GM12878 (cell line): ENCODE measurements at regions of chr11 and their contacts with region 1.

Region 1: DNA sequence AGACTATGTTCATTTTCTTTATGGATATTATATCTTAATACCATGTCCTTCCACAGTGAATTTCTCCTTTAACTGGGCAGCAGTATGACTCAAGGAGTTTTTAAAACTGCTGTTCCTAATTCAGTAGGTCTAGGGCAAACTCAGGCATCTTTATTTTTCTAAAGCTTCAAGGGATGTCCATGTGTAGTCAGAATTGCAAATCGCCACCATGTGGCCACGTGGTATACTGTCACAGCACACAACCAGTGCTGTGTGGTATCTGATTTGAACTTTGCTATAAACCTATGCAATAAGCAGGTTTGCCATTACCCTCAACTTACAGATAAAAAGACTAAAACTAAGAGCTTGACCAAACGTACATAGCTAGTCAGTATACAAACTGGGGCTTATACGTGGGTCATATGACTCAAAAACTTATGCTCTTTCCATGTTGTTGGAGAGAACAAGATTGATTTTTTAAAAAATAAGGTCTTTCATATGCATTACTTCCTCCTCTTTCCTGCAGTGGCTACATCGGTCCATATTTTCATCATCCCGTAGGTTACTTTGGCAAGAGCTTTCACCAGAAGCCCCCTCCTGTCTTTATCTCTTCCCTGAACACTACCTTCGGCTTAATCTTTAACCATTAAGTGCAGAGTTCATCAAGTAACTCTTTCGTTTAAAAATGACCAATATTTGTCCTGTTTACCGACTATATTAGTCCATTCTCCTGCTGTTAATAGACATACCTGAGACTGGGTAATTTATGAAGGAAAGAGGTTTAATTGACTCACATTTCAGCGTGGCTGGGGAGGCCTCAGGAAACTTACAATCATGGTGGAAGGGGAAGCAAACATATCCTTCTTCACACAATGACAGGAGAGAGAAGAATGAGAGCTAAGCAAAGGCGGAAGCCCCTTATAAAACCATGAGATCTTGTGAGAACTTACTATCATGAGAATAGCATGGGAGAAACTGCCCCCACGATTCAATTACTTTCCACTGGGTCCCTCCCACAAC is 8.0 kb upstream of the HTATIP2 start:
- DNase-seq: no peak
- ATAC-seq: peak; percentile 95
- H3K4me3 ChIP-seq: no peak overlapping the region
- H3K27ac ChIP-seq: no peak overlapping the region
- H3K4me1 ChIP-seq: no peaks in the 10 kb centered on the region
- H3K27me3 ChIP-seq: no peaks in the 10 kb centered on the region
- CTCF ChIP-seq: peak; percentile 45 to 57 (median 50)
- EP300 ChIP-seq: no peak
- POLR2A ChIP-seq: no peak
- RAD21 ChIP-seq: peak; percentile 27; the same call in 1 of the 2 replicates

Region 2: DNA sequence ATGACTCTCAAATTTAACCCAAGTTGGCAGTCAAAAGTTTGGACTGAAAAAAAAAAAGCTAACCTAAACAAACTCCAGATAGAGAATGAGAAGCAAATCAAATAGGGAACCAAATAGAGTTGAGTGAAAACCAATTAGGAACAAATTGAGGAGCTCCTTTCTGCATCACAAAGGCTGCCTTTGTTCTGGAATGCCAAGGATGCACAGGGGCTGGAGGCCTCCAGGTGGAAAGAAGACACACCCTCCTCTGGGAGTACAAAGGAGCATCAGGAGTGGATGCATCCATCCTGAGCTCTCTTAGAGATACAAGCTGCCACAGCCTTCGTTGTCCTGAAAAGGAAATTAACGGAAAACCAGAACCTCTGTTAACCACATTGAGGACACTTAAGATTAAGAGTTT is 1489.6 kb before region 1 on chr11:
- CTCF ChIA-PET with region 1: no interaction called
- POLR2A ChIA-PET with region 1: no interaction called
- RAD21 ChIA-PET with region 1: no interaction called
- SMC1A ChIA-PET with region 1: no interaction called
- in situ Hi-C with region 1: no loop called
- intact Hi-C with region 1: no loop called
- DNase-seq: no peak
- ATAC-seq: no peak
- H3K4me3 ChIP-seq: no peak overlapping the region
- H3K27ac ChIP-seq: no peak overlapping the region
- H3K4me1 ChIP-seq: no peaks in the 10 kb centered on the region
- H3K27me3 ChIP-seq: no peaks in the 10 kb centered on the region; a peak in 1 of 4 replicates
- CTCF ChIP-seq: no peak
- EP300 ChIP-seq: no peak
- POLR2A ChIP-seq: no peak
- RAD21 ChIP-seq: no peak

Region 3: GRCh38 chr11:20243974-20244373 is 111.5 kb before region 1 on chr11:
- CTCF ChIA-PET with region 1: interaction called, 4 read pairs
- POLR2A ChIA-PET with region 1: no interaction called
- RAD21 ChIA-PET with region 1: interaction called, 3 read pairs
- SMC1A ChIA-PET with region 1: interaction called, 5 read pairs
- in situ Hi-C with region 1: no loop called
- intact Hi-C with region 1: loop called (anchors 2 kb)
- DNase-seq: no peak
- ATAC-seq: no peak
- H3K4me3 ChIP-seq: no peak overlapping the region
- H3K27ac ChIP-seq: no peak overlapping the region
- H3K4me1 ChIP-seq: no peaks in the 10 kb centered on the region
- H3K27me3 ChIP-seq: peaks cover 0 to 3% of the 10 kb centered on the region in 2 experiments; a peak in 1 of 4 replicates
- CTCF ChIP-seq: peak in 2 of 3 experiments; percentile 23 to 29; a peak in 4 of 6 replicates
- EP300 ChIP-seq: no peak
- POLR2A ChIP-seq: no peak
- RAD21 ChIP-seq: peak; percentile 31; the same call in 1 of the 2 replicates

Region 4: DNA sequence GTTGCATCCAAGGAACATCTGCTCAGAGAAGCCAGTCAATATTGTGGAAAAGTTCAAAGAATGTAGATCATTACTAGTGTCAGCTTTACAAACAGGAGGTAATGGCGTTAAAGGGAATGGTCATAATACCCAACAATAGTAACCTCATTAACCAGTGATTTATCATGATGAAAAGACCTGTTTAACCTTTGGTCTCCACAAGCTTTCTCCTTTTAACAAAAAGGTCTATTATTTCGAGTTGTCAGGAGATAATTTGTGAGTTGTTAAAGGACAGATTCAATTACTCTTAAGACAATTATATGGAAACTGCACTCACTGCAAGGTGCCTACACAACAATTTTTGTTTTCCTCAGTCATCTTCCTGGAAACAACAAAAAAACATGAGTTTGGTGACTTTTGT is 65.8 kb before region 1 on chr11:
- CTCF ChIA-PET with region 1: no interaction called
- POLR2A ChIA-PET with region 1: no interaction called
- RAD21 ChIA-PET with region 1: no interaction called
- SMC1A ChIA-PET with region 1: no interaction called
- in situ Hi-C with region 1: no loop called
- intact Hi-C with region 1: no loop called
- DNase-seq: no peak
- ATAC-seq: no peak
- H3K4me3 ChIP-seq: no peak overlapping the region
- H3K27ac ChIP-seq: no peak overlapping the region
- H3K4me1 ChIP-seq: no peaks in the 10 kb centered on the region
- H3K27me3 ChIP-seq: 0 out of 4 replicates have a peak, but pooled peaks cover 0 to 3% of the 10 kb centered on the region in 2 experiments
- CTCF ChIP-seq: no peak
- EP300 ChIP-seq: no peak
- POLR2A ChIP-seq: no peak
- RAD21 ChIP-seq: no peak

Region 5: DNA sequence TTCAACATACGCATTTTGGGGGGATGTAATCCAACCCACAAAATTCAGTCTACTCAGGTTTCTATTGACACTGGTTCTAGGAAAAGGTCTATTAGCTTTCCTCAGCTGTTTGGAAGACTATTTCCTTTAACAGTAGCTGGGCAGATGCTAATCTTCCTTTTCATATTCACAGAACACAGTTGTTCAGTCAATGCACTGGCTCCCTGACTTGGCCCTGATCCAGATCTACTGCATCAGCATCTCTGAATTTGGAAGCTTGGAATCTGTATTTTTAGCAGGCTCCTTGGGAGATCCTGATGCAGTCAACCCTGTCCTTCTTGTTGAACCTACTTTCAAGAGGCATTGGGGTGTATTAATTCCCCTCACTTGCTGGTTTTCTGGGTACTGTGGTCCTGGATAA is 14.3 kb after region 1 on chr11:
- CTCF ChIA-PET with region 1: interaction called, 66 read pairs
- POLR2A ChIA-PET with region 1: no interaction called
- RAD21 ChIA-PET with region 1: no interaction called
- SMC1A ChIA-PET with region 1: interaction called, 8 read pairs
- in situ Hi-C with region 1: no loop called
- intact Hi-C with region 1: no loop called
- DNase-seq: no peak
- ATAC-seq: no peak
- H3K4me3 ChIP-seq: no peak overlapping the region
- H3K27ac ChIP-seq: no peak overlapping the region
- H3K4me1 ChIP-seq: no peaks in the 10 kb centered on the region
- H3K27me3 ChIP-seq: no peaks in the 10 kb centered on the region
- CTCF ChIP-seq: no peak
- EP300 ChIP-seq: no peak
- POLR2A ChIP-seq: no peak
- RAD21 ChIP-seq: no peak

Region 6: GRCh38 chr11:20451568-20451967 is 96.0 kb after region 1 on chr11:
- CTCF ChIA-PET with region 1: no interaction called
- POLR2A ChIA-PET with region 1: no interaction called
- RAD21 ChIA-PET with region 1: no interaction called
- SMC1A ChIA-PET with region 1: no interaction called
- in situ Hi-C with region 1: no loop called
- intact Hi-C with region 1: no loop called
- DNase-seq: no peak
- ATAC-seq: no peak
- H3K4me3 ChIP-seq: no peak overlapping the region
- H3K27ac ChIP-seq: no peak overlapping the region
- H3K4me1 ChIP-seq: no peaks in the 10 kb centered on the region
- H3K27me3 ChIP-seq: no peaks in the 10 kb centered on the region
- CTCF ChIP-seq: no peak
- EP300 ChIP-seq: no peak
- POLR2A ChIP-seq: no peak
- RAD21 ChIP-seq: no peak